ENCODE measurements at regions of chr7 and their contacts with region 1.

Region 1: GRCh38 chr7:104983578-104984539 is 30.1 kb upstream of the KMT2E start:
- DNase-seq: peak; percentile 94 to 97
- ATAC-seq: peak; percentile 96
- H3K4me3 ChIP-seq: peak overlapping the region; percentile 38 to 92
- H3K27ac ChIP-seq: peak overlapping the region; percentile 62 to 91
- H3K4me1 ChIP-seq: peaks cover 2 to 15% of the 10 kb centered on the region in 2 donors
- H3K27me3 ChIP-seq: no peaks in the 10 kb centered on the region

Region 2: GRCh38 chr7:104694710-104695109 is 289.1 kb before region 1 on chr7:
- intact Hi-C with region 1: no loop called
- DNase-seq: no peak
- ATAC-seq: no peak
- H3K4me3 ChIP-seq: no peak overlapping the region
- H3K27ac ChIP-seq: no peak overlapping the region
- H3K4me1 ChIP-seq: no peaks in the 10 kb centered on the region
- H3K27me3 ChIP-seq: no peaks in the 10 kb centered on the region

Region 3: GRCh38 chr7:104878577-104878976 is 105.3 kb before region 1 on chr7:
- intact Hi-C with region 1: no loop called
- DNase-seq: no peak
- ATAC-seq: no peak
- H3K4me3 ChIP-seq: no peak overlapping the region
- H3K27ac ChIP-seq: no peak overlapping the region
- H3K4me1 ChIP-seq: no peaks in the 10 kb centered on the region
- H3K27me3 ChIP-seq: no peaks in the 10 kb centered on the region

Region 4: GRCh38 chr7:104923010-104923421 is 60.8 kb before region 1 on chr7:
- intact Hi-C with region 1: loop called in 1 of 2 experiments (anchors 5 kb)
- DNase-seq: peak; percentile 82 to 85
- ATAC-seq: peak; percentile 90
- H3K4me3 ChIP-seq: no peak overlapping the region
- H3K27ac ChIP-seq: peak overlapping the region in 1 of 2 donors; percentile 52
- H3K4me1 ChIP-seq: no peaks in the 10 kb centered on the region
- H3K27me3 ChIP-seq: no peaks in the 10 kb centered on the region

Region 5: DNA sequence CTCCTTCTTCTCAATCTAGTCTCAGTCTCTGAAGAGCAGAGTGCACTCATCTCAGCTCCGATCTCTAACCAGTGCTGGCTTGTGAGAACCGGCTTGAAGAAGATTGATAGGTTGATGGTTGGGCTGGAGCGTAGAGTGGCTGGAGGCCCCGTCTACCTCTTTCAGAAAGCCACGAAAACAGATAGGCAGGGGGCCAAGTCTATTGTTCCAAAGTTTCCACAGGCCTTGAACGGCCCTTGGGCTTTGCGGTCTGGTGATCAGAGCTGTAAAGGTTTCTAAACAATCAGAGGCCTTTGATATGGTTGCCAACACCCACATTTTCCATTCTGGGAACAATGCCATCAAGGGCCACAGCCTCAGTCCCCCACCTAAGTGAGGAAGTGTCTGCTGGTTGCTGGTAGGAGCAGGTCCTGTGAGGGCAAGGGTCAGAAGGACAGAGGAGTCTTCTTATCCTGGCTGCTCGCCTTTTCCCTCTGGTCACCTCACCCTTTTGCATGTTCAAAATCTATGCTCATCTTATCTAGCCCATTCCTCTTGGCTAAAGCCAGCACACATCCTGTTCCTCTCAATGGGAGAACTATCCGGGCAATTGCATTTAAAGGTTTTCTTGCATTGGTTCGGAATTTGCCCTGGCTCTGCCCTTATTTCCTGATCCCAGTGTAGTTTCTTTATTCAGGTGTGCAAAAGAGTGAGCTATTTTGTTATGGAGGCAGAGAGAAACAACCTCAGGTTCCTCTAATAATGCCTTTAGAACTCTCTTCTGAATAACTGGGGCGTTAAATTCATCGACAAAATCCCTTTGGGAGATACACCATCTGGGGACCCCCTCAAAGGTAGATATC is 40.1 kb before region 1 on chr7:
- intact Hi-C with region 1: loop called in 1 of 2 experiments (anchors 5 kb)
- DNase-seq: no peak
- ATAC-seq: peak; percentile 23
- H3K4me3 ChIP-seq: no peak overlapping the region
- H3K27ac ChIP-seq: peak overlapping the region; percentile 68 to 76
- H3K4me1 ChIP-seq: no peaks in the 10 kb centered on the region
- H3K27me3 ChIP-seq: no peaks in the 10 kb centered on the region

Region 6: DNA sequence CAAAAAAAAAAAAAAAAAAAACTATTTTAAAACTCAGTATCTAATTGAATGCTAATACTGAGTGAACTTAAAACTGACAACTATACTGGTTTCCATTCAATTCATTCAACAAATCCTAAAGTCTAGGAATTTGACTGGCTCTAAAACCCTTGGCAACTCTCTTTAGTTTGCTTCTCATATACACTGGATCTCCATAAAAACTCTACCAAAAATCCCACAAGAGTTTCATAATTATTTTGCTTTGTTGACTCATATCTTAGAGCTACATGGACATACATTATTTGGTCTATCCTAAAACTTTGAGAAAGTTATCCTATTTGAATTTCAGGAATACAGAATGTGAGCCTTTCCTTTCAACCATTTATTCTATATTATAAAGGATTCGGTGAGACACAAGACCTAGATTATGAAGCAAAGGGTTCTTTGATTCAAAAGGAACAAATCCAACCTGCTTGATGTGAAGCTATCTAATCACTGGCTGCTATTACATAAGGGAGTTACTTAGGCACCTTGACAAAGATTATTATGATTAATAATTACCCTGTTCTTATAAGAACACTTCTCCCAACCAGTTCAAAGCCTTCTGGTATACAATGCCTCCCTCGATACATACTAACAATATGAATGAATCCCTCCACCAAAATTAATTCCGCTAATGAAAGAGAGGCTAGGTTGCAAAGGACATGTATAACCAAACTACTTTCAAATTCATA is 14.3 kb after region 1 on chr7:
- intact Hi-C with region 1: loop called in 1 of 2 experiments (anchors 2 kb)
- DNase-seq: no peak
- ATAC-seq: no peak
- H3K4me3 ChIP-seq: no peak overlapping the region
- H3K27ac ChIP-seq: no peak overlapping the region
- H3K4me1 ChIP-seq: peaks cover 4 to 14% of the 10 kb centered on the region in 2 donors
- H3K27me3 ChIP-seq: no peaks in the 10 kb centered on the region

Region 7: GRCh38 chr7:105013221-105013815 is 29.5 kb after region 1 on chr7:
- intact Hi-C with region 1: loop called (anchors 2 to 5 kb)
- DNase-seq: peak; percentile 97
- ATAC-seq: peak; percentile 92
- H3K4me3 ChIP-seq: peak overlapping the region; percentile 19 to 91
- H3K27ac ChIP-seq: peak overlapping the region; percentile 96 to 99
- H3K4me1 ChIP-seq: no peaks in the 10 kb centered on the region
- H3K27me3 ChIP-seq: no peaks in the 10 kb centered on the region

Region 8: GRCh38 chr7:105101864-105102263 is 118.0 kb after region 1 on chr7:
- intact Hi-C with region 1: loop called in 1 of 2 experiments (anchors 5 kb)
- DNase-seq: no peak
- ATAC-seq: no peak
- H3K4me3 ChIP-seq: no peak overlapping the region
- H3K27ac ChIP-seq: no peak overlapping the region
- H3K4me1 ChIP-seq: peaks cover 0 to 2% of the 10 kb centered on the region in 2 donors
- H3K27me3 ChIP-seq: no peaks in the 10 kb centered on the region

Measured in aorta (tissue), 5 donors.